CD8-positive, alpha-beta memory T cell (primary cell): ENCODE measurements at regions of chr6 and their contacts with region 1.

Region 1: GRCh38 chr6:159110013-159110412 is 59.2 kb upstream of the FNDC1 start:
- DNase-seq: peak in 4 of 5 donors; percentile 31 to 63 (median 43)
- H3K4me3 ChIP-seq: no peak overlapping the region
- H3K4me3 Mint-ChIP-seq: peak overlapping the region in 4 of 7 donors; percentile 8 to 73 (median 31)
- H3K27ac ChIP-seq: no peak overlapping the region
- H3K27ac Mint-ChIP-seq: peak overlapping the region; percentile 58 to 94 (median 84)
- H3K4me1 ChIP-seq: peaks cover 62% of the 10 kb centered on the region
- H3K4me1 Mint-ChIP-seq: peaks cover 59 to 69% (median 63%) of the 10 kb centered on the region in 3 donors
- H3K27me3 ChIP-seq: no peaks in the 10 kb centered on the region
- H3K27me3 Mint-ChIP-seq: no peaks in the 10 kb centered on the region

Region 2: GRCh38 chr6:158991017-158991723 is 118.8 kb before region 1 on chr6:
- CTCF ChIA-PET with region 1: no interaction called
- POLR2A ChIA-PET with region 1: interaction called, 14 read pairs
- DNase-seq: no peak
- H3K4me3 ChIP-seq: no peak overlapping the region
- H3K4me3 Mint-ChIP-seq: no peak overlapping the region
- H3K27ac ChIP-seq: no peak overlapping the region
- H3K27ac Mint-ChIP-seq: peak overlapping the region in 3 of 8 donors; percentile 34 to 60 (median 45)
- H3K4me1 ChIP-seq: peaks cover 11% of the 10 kb centered on the region
- H3K4me1 Mint-ChIP-seq: peaks cover 14 to 34% (median 20%) of the 10 kb centered on the region in 3 donors
- H3K27me3 ChIP-seq: no peaks in the 10 kb centered on the region
- H3K27me3 Mint-ChIP-seq: no peaks in the 10 kb centered on the region

Region 3: DNA sequence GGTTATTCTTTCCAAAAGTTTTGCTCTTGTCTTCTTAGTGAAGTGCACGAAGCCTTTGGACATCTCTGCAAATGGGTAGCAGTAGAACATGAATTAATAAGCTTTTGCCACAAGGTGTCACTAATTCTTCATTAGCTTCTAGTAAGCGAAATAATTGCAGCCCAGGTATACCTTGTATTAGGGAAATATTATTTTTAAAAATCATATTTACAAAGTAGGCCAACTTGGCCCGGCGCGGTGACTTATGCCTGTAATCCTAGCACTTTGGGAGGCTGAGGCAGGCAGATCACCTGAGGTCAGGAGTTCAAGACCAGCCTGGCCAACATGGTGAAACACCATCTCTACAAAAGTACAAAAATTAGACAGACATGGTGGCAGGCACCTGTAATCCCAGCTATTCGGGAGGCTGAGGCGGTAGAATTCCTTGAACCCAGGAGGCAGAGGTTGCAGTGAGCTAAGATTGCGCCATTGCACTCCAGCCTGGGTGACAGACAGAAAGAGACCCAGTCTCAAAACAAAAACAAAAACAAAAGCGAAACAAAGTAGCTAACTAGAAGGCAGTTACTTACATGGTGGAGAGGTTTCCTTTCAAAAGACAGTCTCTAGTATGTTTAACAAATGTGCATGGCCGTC is 101.2 kb before region 1 on chr6:
- CTCF ChIA-PET with region 1: interaction called, 248 read pairs
- POLR2A ChIA-PET with region 1: interaction called, 19 read pairs
- DNase-seq: peak in 3 of 5 donors; percentile 48 to 53 (median 48)
- H3K4me3 ChIP-seq: peak overlapping the region; percentile 44
- H3K4me3 Mint-ChIP-seq: peak overlapping the region; percentile 47 to 92 (median 81)
- H3K27ac ChIP-seq: no peak overlapping the region
- H3K27ac Mint-ChIP-seq: peak overlapping the region; percentile 49 to 92 (median 84)
- H3K4me1 ChIP-seq: peaks cover 20% of the 10 kb centered on the region
- H3K4me1 Mint-ChIP-seq: peaks cover 35 to 50% (median 50%) of the 10 kb centered on the region in 3 donors
- H3K27me3 ChIP-seq: no peaks in the 10 kb centered on the region
- H3K27me3 Mint-ChIP-seq: no peaks in the 10 kb centered on the region

Region 4: GRCh38 chr6:159125014-159125609 is 15.1 kb after region 1 on chr6:
- CTCF ChIA-PET with region 1: interaction called, 15 read pairs
- POLR2A ChIA-PET with region 1: no interaction called
- DNase-seq: no peak
- H3K4me3 ChIP-seq: no peak overlapping the region
- H3K4me3 Mint-ChIP-seq: no peak overlapping the region
- H3K27ac ChIP-seq: no peak overlapping the region
- H3K27ac Mint-ChIP-seq: no peak overlapping the region
- H3K4me1 ChIP-seq: no peaks in the 10 kb centered on the region
- H3K4me1 Mint-ChIP-seq: no peaks in the 10 kb centered on the region
- H3K27me3 ChIP-seq: no peaks in the 10 kb centered on the region
- H3K27me3 Mint-ChIP-seq: peaks cover 3 to 4% of the 10 kb centered on the region in 2 donors

Region 5: GRCh38 chr6:159174263-159174969 is 64.4 kb after region 1 on chr6:
- CTCF ChIA-PET with region 1: no interaction called
- POLR2A ChIA-PET with region 1: no interaction called
- DNase-seq: peak; percentile 37 to 67 (median 43)
- H3K4me3 ChIP-seq: no peak overlapping the region
- H3K4me3 Mint-ChIP-seq: peak overlapping the region in 3 of 7 donors; percentile 5 to 54 (median 47)
- H3K27ac ChIP-seq: no peak overlapping the region
- H3K27ac Mint-ChIP-seq: peak overlapping the region in 1 of 8 donors; percentile 21
- H3K4me1 ChIP-seq: peaks cover 6% of the 10 kb centered on the region
- H3K4me1 Mint-ChIP-seq: peaks cover 15 to 20% (median 18%) of the 10 kb centered on the region in 3 donors
- H3K27me3 ChIP-seq: peaks cover 32% of the 10 kb centered on the region
- H3K27me3 Mint-ChIP-seq: peaks cover 46 to 77% of the 10 kb centered on the region in 2 donors

Region 6: DNA sequence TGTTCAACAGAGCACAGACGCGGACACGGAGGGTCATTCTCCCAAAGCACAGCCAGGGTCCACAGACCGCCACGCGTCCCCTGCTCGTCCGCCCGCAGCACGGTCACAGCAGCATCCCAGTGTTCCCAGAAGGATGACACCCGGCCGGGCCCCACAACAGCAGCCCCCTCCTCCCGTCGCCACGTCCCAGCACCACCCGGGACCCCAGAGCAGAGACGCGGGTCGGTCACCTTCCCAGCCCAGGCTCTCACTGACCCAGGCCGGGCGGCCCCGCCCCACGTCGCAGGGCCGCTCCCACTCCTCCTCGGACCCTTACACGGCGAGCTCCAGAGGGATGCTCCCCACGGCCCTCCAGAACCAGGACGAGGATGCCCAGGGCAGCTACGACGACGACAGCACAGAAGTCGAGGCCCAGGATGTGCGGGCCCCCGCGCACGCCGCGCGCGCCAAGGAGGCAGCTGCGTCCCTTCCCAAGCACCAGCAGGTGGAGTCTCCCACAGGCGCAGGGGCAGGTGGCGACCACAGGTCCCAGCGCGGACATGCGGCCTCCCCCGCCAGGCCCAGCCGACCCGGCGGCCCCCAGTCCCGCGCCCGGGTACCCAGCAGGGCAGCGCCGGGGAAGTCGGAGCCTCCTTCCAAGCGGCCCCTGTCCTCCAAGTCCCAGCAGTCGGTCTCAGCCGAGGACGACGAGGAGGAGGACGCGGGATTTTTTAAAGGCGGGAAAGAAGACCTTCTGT is 123.5 kb after region 1 on chr6:
- CTCF ChIA-PET with region 1: no interaction called
- POLR2A ChIA-PET with region 1: no interaction called
- DNase-seq: no peak
- H3K4me3 ChIP-seq: no peak overlapping the region
- H3K4me3 Mint-ChIP-seq: no peak overlapping the region
- H3K27ac ChIP-seq: no peak overlapping the region
- H3K27ac Mint-ChIP-seq: no peak overlapping the region
- H3K4me1 ChIP-seq: no peaks in the 10 kb centered on the region
- H3K4me1 Mint-ChIP-seq: peaks cover 1 to 5% (median 4%) of the 10 kb centered on the region in 3 donors
- H3K27me3 ChIP-seq: no peaks in the 10 kb centered on the region
- H3K27me3 Mint-ChIP-seq: peaks cover 16 to 56% of the 10 kb centered on the region in 2 donors